MCF 10A (cell line): ENCODE measurements at regions of chr5 and their contacts with region 1.

Region 1: DNA sequence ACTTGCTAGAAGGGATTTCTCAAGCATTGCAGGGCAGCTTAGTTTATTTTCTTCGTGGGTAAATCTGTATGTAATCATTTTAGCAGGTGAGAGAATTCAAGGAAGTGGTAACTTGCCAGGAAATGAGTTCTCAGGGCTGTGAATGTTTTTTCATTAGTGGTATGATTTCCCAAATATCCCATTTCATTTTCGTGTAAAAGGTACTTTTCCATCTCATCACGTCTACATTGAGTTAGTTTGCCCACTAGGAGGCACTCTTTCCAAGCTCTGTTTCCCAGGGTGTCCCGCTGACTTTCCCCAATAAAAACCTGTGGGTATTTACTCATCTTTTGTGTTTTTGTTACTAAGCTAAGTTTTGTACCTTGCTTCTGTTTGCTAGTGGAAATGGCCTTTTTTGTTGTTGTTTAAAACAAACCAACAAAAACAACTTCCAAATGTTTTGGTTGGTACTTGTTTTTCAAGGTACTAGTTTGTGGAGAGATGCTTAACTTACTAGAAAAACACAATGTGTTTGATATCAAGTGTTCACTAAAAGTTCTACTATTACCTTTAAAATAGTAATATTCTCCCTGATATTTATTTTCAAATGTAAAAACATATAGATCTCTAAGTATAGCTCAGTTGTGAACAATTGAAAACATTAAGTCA is 373.6 kb downstream of the ADGRV1 start:
- DNase-seq: peak; percentile 77
- H3K4me3 Mint-ChIP-seq: no peak overlapping the region
- H3K27ac Mint-ChIP-seq: no peak overlapping the region
- H3K4me1 Mint-ChIP-seq: peaks cover 11% of the 10 kb centered on the region
- H3K27me3 Mint-ChIP-seq: no peaks in the 10 kb centered on the region
- CTCF ChIP-seq: peak; percentile 73

Region 2: DNA sequence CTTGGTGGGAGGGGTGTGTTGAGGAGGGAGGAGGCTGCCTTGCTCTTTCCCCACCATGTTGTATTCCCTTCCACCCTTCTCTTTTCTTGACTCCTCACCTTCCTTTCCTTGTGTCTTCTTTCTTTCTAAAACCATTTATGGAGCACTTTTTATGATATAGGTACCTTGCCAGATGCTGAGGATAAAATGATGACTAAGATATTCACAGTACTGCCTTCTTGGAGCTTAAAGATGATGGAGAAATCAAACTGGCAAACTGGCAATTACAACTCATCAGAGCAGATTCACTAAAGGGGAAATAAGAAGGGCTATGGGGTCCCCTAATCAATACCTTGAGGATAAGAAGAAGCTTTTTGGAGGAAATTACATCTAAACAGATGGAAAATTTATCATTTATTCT is 1776.0 kb before region 1 on chr5:
- CTCF ChIA-PET with region 1: no interaction called
- POLR2A ChIA-PET with region 1: no interaction called
- intact Hi-C with region 1: no loop called
- DNase-seq: no peak
- H3K4me3 Mint-ChIP-seq: no peak overlapping the region
- H3K27ac Mint-ChIP-seq: no peak overlapping the region
- H3K4me1 Mint-ChIP-seq: no peaks in the 10 kb centered on the region
- H3K27me3 Mint-ChIP-seq: no peaks in the 10 kb centered on the region
- CTCF ChIP-seq: no peak

Region 3: GRCh38 chr5:90878549-90879196 is 53.5 kb before region 1 on chr5:
- CTCF ChIA-PET with region 1: interaction called, 13 read pairs
- POLR2A ChIA-PET with region 1: no interaction called
- intact Hi-C with region 1: no loop called
- DNase-seq: peak; percentile 23
- H3K4me3 Mint-ChIP-seq: no peak overlapping the region
- H3K27ac Mint-ChIP-seq: no peak overlapping the region
- H3K4me1 Mint-ChIP-seq: peaks cover 6% of the 10 kb centered on the region
- H3K27me3 Mint-ChIP-seq: no peaks in the 10 kb centered on the region
- CTCF ChIP-seq: no peak

Region 4: DNA sequence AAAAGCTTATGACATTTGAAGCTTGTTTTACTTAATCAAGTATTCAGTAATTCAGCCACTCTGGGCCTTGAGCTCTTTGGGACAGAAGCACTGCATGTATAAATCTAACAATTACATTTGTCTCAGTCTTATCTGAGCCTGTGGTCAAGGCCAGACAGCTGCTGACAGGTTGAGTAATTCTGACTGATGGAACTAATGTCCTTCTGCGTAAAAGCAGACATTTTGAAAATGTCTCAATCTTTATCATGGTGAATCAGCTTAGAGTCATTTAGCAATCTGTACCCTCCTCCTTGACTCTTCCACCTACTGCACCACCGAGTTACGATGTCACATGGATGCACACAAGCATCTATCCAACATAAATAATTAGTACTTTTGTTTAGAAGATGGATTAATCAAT is 51.0 kb after region 1 on chr5:
- CTCF ChIA-PET with region 1: interaction called, 15 read pairs
- POLR2A ChIA-PET with region 1: interaction called, 4 read pairs
- intact Hi-C with region 1: no loop called
- DNase-seq: peak; percentile 77
- H3K4me3 Mint-ChIP-seq: no peak overlapping the region
- H3K27ac Mint-ChIP-seq: peak overlapping the region; percentile 61
- H3K4me1 Mint-ChIP-seq: peaks cover 15% of the 10 kb centered on the region
- H3K27me3 Mint-ChIP-seq: no peaks in the 10 kb centered on the region
- CTCF ChIP-seq: no peak

Region 5: GRCh38 chr5:91095313-91095712 is 163.1 kb after region 1 on chr5:
- CTCF ChIA-PET with region 1: interaction called, 16 read pairs
- POLR2A ChIA-PET with region 1: interaction called, 3 read pairs
- intact Hi-C with region 1: no loop called
- DNase-seq: no peak
- H3K4me3 Mint-ChIP-seq: no peak overlapping the region
- H3K27ac Mint-ChIP-seq: no peak overlapping the region
- H3K4me1 Mint-ChIP-seq: peaks cover 10% of the 10 kb centered on the region
- H3K27me3 Mint-ChIP-seq: no peaks in the 10 kb centered on the region
- CTCF ChIP-seq: no peak

Region 6: GRCh38 chr5:91219803-91220371 is 287.7 kb after region 1 on chr5:
- CTCF ChIA-PET with region 1: interaction called, 16 read pairs
- POLR2A ChIA-PET with region 1: interaction called, 3 read pairs
- intact Hi-C with region 1: no loop called
- DNase-seq: peak; percentile 22
- H3K4me3 Mint-ChIP-seq: no peak overlapping the region
- H3K27ac Mint-ChIP-seq: no peak overlapping the region
- H3K4me1 Mint-ChIP-seq: peaks cover 18% of the 10 kb centered on the region
- H3K27me3 Mint-ChIP-seq: no peaks in the 10 kb centered on the region
- CTCF ChIP-seq: no peak

Region 7: DNA sequence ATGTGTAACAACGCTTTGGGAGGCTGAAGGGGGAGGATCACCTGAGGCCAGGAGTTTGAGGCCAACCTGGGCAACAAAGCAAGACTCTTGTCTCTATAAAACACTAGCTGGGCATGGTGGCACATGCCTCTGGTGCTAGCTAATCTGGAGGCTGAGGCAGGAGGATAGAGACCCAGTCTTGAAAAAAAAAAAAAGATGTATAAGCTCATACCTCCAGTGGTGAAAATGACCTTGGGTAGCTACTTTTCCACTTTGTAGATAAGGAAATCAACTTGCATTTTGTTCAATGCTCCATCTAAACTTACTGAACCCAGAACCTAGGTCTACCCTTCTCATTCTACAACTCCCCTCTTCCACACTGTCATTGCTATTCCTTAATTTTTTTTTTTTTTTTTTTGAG is 434.4 kb after region 1 on chr5:
- CTCF ChIA-PET with region 1: interaction called, 14 read pairs
- POLR2A ChIA-PET with region 1: no interaction called
- intact Hi-C with region 1: no loop called
- DNase-seq: no peak
- H3K4me3 Mint-ChIP-seq: no peak overlapping the region
- H3K27ac Mint-ChIP-seq: no peak overlapping the region
- H3K4me1 Mint-ChIP-seq: peaks cover 1% of the 10 kb centered on the region
- H3K27me3 Mint-ChIP-seq: no peaks in the 10 kb centered on the region
- CTCF ChIP-seq: no peak